Right ventricle myocardium inferior (tissue), 1 donor: ENCODE measurements at regions of chr22 and their contacts with region 1.

Region 1: DNA sequence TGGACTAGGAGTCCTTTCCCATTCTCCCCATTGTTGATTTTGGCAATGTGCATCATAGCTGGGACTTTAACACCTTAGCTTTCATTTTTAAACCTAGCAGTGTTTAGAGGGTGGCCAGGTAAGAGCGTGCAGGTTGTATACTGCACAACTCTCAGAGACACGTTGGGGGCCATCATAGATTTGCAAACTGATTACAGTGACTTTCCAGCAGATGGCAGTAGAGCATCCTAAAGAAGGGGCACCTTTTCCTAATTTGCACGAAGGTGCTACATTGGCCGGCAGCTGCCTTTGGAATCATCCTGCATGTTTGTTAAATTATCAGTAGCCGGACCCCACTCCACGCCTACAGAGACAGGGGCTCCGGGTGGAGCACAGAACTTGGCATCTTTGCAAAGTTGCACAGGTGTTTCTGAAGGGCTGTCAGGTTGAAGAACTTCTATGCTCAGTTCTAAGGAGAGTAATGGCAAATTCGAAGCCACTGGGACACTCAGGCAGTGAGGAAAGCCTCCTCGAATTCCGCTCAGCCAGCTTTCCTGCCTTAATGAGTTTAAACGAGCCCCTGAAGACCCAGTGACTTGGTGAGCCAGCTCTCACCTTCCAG is 7.7 kb downstream of the LHFPL7 start:
- DNase-seq: no peak
- ATAC-seq: no peak

Region 2: GRCh38 chr22:24985826-24986214 is 47.0 kb after region 1 on chr22:
- intact Hi-C with region 1: no loop called
- DNase-seq: no peak
- ATAC-seq: peak; percentile 25

Region 3: GRCh38 chr22:25057013-25057881 is 118.4 kb after region 1 on chr22:
- intact Hi-C with region 1: loop called (anchors 5 kb)
- DNase-seq: peak; percentile 78
- ATAC-seq: peak; percentile 63